Activated CD4-positive, alpha-beta T cell treated with anti-CD3 and anti-CD28 coated beads for 36 hours (primary cell): ENCODE measurements at regions of chr3 and their contacts with region 1.

Region 1: GRCh38 chr3:126083913-126084767 is at the start of gene SLC41A3:
- DNase-seq: peak; percentile 93
- ATAC-seq: peak; percentile 92
- H3K4me3 Mint-ChIP-seq: peak within 1 kb of the TSS; percentile 92
- H3K27ac Mint-ChIP-seq: peak within 1 kb of the TSS; percentile 96
- H3K4me1 Mint-ChIP-seq: peaks cover 24% of the 10 kb centered on the region
- H3K27me3 Mint-ChIP-seq: no peaks in the 10 kb centered on the region
- total RNA-seq, gene SLC41A3: 23.1 to 26.6 TPM

Region 2: GRCh38 chr3:125594581-125595011 is 489.5 kb before region 1 on chr3:
- CTCF ChIA-PET with region 1: no interaction called
- POLR2A ChIA-PET with region 1: no interaction called
- intact Hi-C with region 1: loop called (anchors 1 to 10 kb)
- DNase-seq: peak; percentile 42
- ATAC-seq: no peak
- H3K4me3 Mint-ChIP-seq: peak overlapping the region; percentile 92
- H3K27ac Mint-ChIP-seq: peak overlapping the region; percentile 91
- H3K4me1 Mint-ChIP-seq: peaks cover 24% of the 10 kb centered on the region
- H3K27me3 Mint-ChIP-seq: no peaks in the 10 kb centered on the region

Region 3: GRCh38 chr3:125767641-125768040 is 316.5 kb before region 1 on chr3:
- CTCF ChIA-PET with region 1: no interaction called
- POLR2A ChIA-PET with region 1: no interaction called
- intact Hi-C with region 1: loop called in 1 of 2 experiments (anchors 2 kb)
- DNase-seq: no peak
- ATAC-seq: no peak
- H3K4me3 Mint-ChIP-seq: peak overlapping the region; percentile 65
- H3K27ac Mint-ChIP-seq: no peak overlapping the region
- H3K4me1 Mint-ChIP-seq: peaks cover 9% of the 10 kb centered on the region
- H3K27me3 Mint-ChIP-seq: peaks cover 18% of the 10 kb centered on the region

Region 4: DNA sequence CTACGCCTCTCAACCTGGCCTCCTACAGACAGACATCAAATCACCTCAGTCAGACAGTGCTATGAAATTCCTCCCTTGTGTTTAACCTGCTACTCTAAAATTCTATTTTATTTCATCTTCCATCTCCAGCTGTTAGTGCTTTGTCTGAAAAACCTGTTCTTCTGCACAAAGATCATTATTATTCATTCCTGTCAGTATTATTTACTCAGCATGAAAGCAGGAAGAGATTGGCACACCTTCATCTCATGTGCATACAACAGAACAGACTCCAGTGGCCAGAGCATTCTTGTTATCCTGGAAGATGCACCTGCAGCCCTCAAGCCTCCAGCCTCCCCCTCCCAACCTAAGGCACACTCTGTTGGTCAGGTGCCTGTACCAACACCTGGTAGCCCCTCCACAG is 117.0 kb before region 1 on chr3:
- CTCF ChIA-PET with region 1: no interaction called
- POLR2A ChIA-PET with region 1: no interaction called
- intact Hi-C with region 1: loop called in 1 of 2 experiments (anchors 5 kb)
- DNase-seq: no peak
- ATAC-seq: no peak
- H3K4me3 Mint-ChIP-seq: no peak overlapping the region
- H3K27ac Mint-ChIP-seq: no peak overlapping the region
- H3K4me1 Mint-ChIP-seq: peaks cover 4% of the 10 kb centered on the region
- H3K27me3 Mint-ChIP-seq: peaks cover 17% of the 10 kb centered on the region

Region 5: GRCh38 chr3:125990253-125990970 is 93.7 kb before region 1 on chr3:
- CTCF ChIA-PET with region 1: interaction called, 4 read pairs
- POLR2A ChIA-PET with region 1: no interaction called
- intact Hi-C with region 1: loop called (anchors 1 to 5 kb)
- DNase-seq: peak; percentile 87
- ATAC-seq: peak; percentile 94
- H3K4me3 Mint-ChIP-seq: peak overlapping the region; percentile 97
- H3K27ac Mint-ChIP-seq: peak overlapping the region; percentile 96
- H3K4me1 Mint-ChIP-seq: peaks cover 25% of the 10 kb centered on the region
- H3K27me3 Mint-ChIP-seq: no peaks in the 10 kb centered on the region

Region 6: GRCh38 chr3:126031981-126032471 is 52.1 kb before region 1 on chr3:
- CTCF ChIA-PET with region 1: no interaction called
- POLR2A ChIA-PET with region 1: no interaction called
- intact Hi-C with region 1: no loop called
- DNase-seq: no peak
- ATAC-seq: no peak
- H3K4me3 Mint-ChIP-seq: no peak overlapping the region
- H3K27ac Mint-ChIP-seq: no peak overlapping the region
- H3K4me1 Mint-ChIP-seq: peaks cover 2% of the 10 kb centered on the region
- H3K27me3 Mint-ChIP-seq: no peaks in the 10 kb centered on the region

Region 7: GRCh38 chr3:126357295-126358037 is 273.3 kb after region 1 on chr3 and contains the start of gene KLF15:
- CTCF ChIA-PET with region 1: interaction called, 3 read pairs
- POLR2A ChIA-PET with region 1: no interaction called
- intact Hi-C with region 1: loop called in 1 of 2 experiments (anchors 1 kb)
- DNase-seq: peak; percentile 87
- ATAC-seq: peak; percentile 95
- H3K4me3 Mint-ChIP-seq: peak within 1 kb of the TSS; percentile 73
- H3K27ac Mint-ChIP-seq: no peak within 1 kb of the TSS
- H3K4me1 Mint-ChIP-seq: peaks cover 9% of the 10 kb centered on the region
- H3K27me3 Mint-ChIP-seq: peaks cover 44% of the 10 kb centered on the region
- total RNA-seq, gene KLF15: 0.32 to 0.53 TPM

Region 8: GRCh38 chr3:126703512-126704462 is 619.6 kb after region 1 on chr3 and contains the start of gene CHCHD6:
- CTCF ChIA-PET with region 1: no interaction called
- POLR2A ChIA-PET with region 1: no interaction called
- intact Hi-C with region 1: loop called in 1 of 2 experiments (anchors 1 kb)
- DNase-seq: peak; percentile 98
- ATAC-seq: peak; percentile 99
- H3K4me3 Mint-ChIP-seq: peak within 1 kb of the TSS; percentile 92
- H3K27ac Mint-ChIP-seq: peak within 1 kb of the TSS; percentile 82
- H3K4me1 Mint-ChIP-seq: peaks cover 23% of the 10 kb centered on the region
- H3K27me3 Mint-ChIP-seq: peaks cover 9% of the 10 kb centered on the region
- total RNA-seq, gene CHCHD6: 17.1 to 17.7 TPM